RWPE1 (cell line): ENCODE measurements at regions of chr6 and their contacts with region 1.

Region 1: DNA sequence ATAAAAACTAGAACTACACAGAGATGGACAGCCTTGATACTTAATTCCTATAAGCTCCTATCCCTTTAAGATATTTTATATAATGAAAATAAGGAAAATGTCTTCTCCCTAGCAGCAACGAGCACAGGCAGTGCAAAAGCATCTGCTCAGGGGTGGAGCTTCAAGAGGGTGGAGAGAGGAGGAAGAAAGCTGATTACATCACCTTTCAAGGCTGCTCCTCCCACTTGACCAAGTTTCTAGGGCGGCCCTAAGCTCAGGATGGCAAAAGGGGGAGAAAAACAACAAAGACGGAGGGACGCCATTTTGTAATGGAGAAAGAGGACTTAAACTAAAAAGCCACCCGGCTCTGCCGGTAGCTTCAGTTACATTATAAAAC is 2.2 kb downstream of the PPP1R10 start:
- DNase-seq: peak; percentile 86
- H3K27ac ChIP-seq: peak overlapping the region; percentile 57
- CTCF ChIP-seq: no peak

Region 2: DNA sequence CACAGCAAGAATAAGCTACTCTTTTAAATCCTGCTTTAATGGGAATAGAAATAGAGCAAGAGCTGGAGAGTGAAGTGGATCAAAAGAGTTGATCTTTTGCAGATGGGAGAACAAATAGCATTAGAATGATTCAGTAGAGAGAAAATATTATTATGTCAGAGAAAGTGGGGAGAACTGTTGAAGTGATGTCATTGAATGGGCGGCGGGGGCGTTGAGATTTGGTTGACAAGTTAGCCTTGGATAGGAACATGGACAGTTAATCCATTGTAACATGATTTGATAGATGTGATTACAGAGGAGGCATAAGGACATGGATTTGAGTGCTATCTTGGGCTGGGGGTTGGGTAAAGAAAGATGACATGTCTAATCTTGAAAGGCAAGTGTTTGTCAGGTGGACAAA is 21.0 kb after region 1 on chr6:
- CTCF ChIA-PET with region 1: interaction called, 4 read pairs
- POLR2A ChIA-PET with region 1: interaction called, 21 read pairs
- DNase-seq: no peak
- H3K27ac ChIP-seq: no peak overlapping the region
- CTCF ChIP-seq: no peak